AG04449 (cell line): ENCODE measurements at regions of chr1 and their contacts with region 1.

Region 1: DNA sequence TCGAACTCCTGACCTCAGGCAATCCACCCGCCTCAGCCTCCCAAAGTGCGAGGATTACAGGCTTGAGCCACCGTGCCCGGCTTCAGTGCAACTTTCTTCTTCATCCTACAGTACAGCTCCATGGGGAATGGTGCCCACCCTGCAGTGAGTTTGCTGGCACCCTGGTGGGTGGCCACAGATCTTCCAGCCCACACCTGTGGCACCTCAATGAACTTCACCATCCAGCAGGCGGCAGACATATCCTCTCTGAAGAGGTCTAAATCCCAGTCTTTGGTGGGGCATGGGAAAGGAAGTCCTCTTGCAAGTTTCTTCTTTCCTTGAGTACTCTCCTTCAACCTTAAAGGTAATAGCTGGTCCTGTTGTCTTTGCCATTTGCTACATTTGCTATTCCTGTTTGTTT is 18.1 kb upstream of the ZBTB8A start:
- DNase-seq: no peak
- H3K4me3 ChIP-seq: no peak overlapping the region
- CTCF ChIP-seq: no peak

Region 2: DNA sequence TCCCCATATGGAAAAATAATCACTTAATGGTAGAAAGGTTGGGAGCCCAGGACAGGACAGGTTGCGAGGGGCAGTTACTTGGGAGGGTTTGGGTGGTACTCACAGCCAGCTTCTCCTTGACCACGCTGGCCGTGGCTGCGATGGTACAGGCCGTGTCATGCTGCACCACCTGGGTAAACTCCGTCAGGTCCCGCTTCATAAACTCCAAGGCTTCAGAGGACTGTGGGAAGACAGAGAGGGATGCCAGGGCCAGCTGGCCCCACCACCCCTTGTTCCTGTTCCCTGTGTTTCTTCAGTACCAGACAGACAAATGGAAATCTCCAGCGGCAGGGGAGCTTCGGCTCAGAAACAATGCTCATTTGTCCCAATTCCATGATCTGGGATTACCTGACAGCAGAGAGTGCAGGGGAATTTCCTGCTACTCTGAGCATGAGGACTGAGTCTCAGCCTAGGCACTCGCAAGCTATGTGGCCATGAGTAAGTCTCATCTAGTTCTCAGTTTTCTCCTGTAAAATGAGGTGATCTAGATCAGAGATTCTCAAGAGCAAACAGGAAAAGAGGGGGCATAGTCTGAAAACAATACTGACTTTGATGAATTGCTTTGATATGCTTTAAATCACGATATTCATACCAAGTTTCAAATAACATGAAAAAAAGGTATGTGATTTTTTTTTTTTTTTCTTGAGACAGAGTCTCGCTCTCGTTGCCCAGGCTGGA is 134.3 kb before region 1 on chr1:
- CTCF ChIA-PET with region 1: interaction called, 12 read pairs
- POLR2A ChIA-PET with region 1: no interaction called
- DNase-seq: no peak
- H3K4me3 ChIP-seq: no peak overlapping the region
- CTCF ChIP-seq: no peak

Region 3: DNA sequence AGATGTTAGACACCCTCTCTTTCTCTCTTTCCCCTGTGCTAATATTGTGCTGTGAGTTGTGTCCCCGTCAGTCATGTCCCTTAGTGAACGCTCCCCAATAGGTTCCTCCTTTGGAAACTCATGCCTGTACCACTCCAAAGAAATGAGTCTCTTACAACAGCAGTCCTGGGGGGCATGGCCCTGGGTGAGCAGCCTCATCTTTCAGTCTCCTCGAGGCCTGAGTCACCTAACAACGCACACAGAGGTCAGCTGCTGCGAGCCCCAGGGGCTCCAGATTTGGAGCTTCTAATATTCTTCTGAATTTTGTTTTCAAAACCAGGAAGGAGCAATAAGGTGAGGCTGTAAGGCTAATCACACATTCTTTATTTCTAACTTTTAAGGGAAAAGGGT is 12.4 kb before region 1 on chr1:
- CTCF ChIA-PET with region 1: interaction called, 23 read pairs
- POLR2A ChIA-PET with region 1: no interaction called
- DNase-seq: no peak
- H3K4me3 ChIP-seq: no peak overlapping the region
- CTCF ChIP-seq: no peak

Region 4: GRCh38 chr1:32538887-32539583 is 17.9 kb after region 1 on chr1 and contains the start of gene ZBTB8A:
- CTCF ChIA-PET with region 1: interaction called, 39 read pairs
- POLR2A ChIA-PET with region 1: interaction called, 4 read pairs
- DNase-seq: no peak
- H3K4me3 ChIP-seq: peak within 1 kb of the TSS; percentile 65
- CTCF ChIP-seq: no peak

Region 5: DNA sequence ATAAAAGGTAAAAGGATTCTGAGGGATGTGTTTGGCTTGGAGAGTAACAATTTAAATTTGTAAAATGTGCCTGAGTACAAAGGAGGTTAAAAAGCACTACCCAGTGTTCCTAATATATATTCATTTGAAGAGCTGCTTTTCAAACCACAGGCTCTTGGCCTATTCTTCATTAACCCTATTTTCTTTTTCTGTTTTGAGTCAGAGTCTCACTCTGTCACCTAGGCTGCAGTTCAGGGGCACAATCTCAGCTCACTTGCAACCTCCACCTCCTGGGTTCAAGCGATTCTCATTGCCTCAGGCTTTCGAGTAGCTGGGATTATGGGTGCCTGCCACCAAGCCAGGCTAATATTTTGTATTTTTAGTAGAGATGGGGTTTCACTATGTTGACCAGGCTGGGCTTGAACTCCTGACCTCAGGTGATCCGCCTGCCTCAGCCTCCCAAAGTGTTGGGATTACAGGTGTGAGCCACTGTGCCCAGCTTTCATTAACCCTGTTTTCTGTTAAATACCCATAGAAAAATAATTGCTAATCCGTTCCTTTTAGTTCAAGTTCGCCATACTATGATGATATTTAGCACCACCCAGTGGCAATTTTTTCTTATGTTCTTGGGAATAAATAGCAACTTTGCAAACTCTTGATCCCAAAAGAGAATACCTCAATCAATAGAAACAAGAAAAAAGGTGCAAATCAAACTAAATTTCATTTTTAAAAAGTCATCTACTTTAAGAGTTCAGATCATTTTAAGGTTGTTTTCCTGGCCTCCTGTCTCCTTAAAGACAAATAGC is 98.7 kb after region 1 on chr1:
- CTCF ChIA-PET with region 1: interaction called, 19 read pairs
- POLR2A ChIA-PET with region 1: no interaction called
- DNase-seq: no peak
- H3K4me3 ChIP-seq: no peak overlapping the region
- CTCF ChIP-seq: no peak